Head of caudate nucleus (tissue), 42 donors: ENCODE measurements at regions of chr19 and their contacts with region 1.

Region 1: DNA sequence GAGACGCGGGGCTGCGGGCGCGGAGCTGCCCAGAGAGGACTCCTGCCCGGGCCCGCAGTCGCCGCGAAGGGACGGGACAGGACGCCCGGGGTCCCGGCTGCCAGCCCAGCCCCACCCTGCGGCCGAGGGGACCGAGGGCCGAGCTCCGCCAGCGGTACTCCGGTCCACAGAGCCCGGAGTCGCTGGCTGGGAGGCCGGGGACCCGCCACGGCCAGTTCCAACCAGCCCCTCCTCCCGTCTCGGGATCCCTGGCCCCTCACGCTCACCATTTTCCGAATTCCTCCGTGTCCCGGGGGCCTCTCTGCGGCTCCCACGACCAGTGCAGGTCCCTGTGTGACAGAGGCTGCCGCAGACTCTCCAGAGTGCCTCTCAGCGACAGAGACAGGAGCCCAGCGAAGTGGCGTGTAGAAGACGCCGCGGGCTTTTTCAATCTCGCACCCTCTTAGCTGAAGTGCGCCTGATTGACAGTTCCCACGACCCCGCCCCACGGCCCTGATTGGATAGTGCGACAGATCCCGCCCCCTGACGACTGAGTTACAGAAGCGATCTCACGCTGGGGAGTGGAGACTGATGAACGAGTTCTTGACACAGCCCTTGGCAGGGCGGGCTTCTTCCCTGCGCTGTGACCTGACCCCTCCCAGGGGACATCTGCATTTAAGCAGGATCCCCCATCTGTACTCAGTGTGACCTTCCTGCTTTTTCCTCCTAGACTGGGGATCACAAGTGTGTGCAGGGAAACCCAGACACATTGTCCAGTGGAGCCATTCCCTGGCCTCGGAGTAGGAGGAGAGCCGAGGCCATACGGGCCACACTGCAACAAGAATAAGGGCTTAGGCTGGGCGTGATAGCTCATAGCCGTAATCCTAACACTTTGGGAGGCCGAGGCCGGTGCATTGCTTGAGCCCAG is 44.0 kb downstream of the ZNF823 start:
- DNase-seq: peak; percentile 93 to 99 (median 97)

Region 2: DNA sequence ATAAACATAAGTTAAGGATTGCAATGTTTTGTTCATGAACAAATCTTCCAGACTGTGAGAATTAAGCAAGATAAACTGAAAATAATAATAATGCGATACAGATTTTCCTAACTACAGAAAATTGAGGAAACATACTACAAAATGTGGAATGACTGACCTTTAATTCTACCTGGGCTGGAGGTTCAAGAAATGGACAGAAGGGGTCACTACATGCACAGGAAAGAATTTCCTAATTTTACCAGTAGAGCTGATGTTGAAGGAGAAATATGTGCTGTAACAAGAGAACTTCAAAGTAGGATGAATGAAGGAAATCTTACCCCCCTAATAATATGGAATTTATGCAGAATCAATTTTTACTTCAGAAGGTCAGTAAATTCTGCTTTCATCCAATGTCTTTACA is 35.2 kb before region 1 on chr19:
- intact Hi-C with region 1: no loop called
- DNase-seq: no peak

Region 3: DNA sequence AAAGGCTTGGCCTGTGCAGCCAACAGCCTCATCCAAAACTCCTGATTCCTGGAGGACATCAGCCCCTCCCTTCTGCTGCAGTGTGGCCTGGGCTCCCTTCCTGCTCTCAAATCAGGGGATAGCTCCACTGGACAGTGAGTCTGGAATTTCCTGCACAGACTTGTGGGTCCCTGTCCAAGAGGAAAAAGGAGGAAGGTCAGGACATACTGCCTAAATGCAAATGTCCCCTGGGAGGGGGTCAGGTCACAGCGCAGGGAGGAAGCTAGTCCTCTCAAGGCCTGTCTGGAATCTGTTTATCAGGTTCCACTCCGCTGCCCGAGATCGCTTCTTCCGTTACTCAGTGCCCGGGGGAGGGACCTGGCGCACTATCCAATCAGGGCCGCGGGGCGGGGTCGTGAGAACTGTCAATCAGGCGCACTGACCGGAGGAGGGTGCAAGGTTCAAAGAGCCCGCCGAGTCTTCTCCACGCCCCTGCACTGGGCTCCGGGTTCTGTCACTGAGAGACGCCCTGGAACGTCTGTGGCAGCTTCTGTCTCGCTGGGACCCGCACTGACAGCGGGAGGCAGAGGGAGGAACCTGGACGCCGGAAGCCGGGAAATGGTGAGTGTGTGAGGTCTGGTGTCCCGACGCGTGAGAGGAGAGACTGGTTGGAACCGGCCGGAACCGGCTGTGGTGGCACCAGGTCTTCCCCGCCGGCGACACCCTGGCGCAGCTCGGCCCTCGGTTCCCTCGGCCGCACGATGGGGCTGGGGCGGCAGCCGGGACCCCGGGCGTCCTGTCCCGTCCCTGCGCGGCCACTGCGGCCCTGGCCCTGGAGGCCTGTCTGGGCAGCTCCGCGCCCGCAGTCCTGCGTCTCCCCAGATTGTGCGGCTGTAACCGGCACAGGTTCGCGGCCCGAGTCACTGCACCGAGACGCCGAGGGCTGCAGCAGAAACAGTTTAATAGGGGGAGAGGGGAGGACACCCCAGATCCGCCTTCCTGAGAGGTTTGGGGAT is 72.1 kb after region 1 on chr19 and contains the start of gene ZNF441:
- intact Hi-C with region 1: loop called (anchors 10 kb)
- DNase-seq: peak; percentile 96 to 99 (median 98)

Region 4: DNA sequence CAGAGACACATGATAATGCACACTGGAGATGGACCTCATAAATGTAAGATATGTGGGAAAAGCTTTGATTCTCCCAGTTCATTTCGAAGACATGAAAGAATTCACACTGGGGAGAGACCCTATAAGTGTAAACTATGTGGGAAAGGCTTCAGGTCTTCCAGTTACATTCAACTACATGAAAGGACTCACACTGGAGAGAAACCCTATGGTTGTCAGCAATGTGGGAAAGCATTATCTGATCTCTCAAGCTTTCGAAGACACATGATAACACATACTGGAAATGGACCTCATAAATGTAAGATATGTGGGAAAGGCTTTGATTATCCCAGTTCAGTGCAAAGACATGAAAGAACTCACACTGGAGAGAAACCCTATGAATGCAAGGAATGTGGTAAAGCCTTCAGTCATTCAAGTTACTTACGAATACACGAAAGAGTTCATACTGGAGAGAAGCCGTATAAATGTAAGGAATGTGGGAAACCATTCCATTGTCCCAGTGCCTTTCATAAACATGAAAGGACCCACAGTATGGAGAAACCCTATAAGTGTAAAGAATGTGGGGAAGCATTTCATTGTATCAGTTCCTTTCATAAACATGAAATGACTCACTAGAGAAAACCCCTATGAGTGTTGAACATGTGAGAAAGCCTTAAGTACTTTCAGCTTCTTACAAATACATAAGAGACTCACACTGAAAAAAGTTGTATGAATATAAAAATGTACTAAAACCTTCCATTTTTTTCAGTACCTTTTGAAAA is 86.7 kb after region 1 on chr19:
- intact Hi-C with region 1: no loop called
- DNase-seq: no peak